ENCODE measurements at regions of chr5 and their contacts with region 1.

Region 1: DNA sequence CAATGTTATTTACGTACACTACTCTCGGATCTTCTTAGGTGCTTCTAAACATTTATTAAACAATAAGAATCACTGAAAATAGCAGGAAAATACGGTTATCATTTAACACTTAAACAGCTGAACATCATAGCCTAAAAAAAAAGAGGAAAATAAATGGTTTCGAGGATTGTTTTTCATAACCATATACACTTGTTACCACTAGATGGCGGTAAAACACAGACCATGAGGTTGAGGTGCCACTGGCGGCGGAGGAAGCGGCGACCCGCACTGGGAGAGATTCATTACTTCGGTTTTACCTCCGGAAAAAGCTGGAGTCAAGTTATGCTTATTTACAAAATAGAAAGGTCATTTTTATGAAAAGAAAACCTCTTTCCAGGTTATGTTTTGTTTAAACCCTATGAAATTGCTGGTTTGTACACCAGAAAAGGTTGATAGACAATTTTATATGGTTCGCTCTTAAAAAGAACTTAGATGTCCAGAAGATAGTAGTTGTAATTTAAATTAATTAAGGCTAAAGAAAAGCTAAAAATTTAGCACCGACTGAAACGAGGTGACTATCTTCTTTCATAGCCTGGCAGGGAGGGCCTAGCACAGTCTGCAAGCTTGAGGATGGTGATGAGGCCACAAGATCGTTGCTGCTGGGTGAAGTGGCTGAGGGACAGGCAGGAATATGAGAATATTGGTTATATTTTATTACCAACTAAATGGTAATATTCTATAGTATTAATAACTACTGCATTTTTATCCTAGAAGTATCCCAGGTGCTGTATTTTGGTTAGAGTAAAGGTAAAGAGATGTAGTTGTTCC is 605.7 kb downstream of the RAB3C start:
- H3K4me3 ChIP-seq: no peak overlapping the region
- H3K27ac ChIP-seq: no peak overlapping the region
- H3K4me1 ChIP-seq: peaks cover 11% of the 10 kb centered on the region
- CTCF ChIP-seq: peak; percentile 68; the same call in 1 of the 2 replicates

Region 2: DNA sequence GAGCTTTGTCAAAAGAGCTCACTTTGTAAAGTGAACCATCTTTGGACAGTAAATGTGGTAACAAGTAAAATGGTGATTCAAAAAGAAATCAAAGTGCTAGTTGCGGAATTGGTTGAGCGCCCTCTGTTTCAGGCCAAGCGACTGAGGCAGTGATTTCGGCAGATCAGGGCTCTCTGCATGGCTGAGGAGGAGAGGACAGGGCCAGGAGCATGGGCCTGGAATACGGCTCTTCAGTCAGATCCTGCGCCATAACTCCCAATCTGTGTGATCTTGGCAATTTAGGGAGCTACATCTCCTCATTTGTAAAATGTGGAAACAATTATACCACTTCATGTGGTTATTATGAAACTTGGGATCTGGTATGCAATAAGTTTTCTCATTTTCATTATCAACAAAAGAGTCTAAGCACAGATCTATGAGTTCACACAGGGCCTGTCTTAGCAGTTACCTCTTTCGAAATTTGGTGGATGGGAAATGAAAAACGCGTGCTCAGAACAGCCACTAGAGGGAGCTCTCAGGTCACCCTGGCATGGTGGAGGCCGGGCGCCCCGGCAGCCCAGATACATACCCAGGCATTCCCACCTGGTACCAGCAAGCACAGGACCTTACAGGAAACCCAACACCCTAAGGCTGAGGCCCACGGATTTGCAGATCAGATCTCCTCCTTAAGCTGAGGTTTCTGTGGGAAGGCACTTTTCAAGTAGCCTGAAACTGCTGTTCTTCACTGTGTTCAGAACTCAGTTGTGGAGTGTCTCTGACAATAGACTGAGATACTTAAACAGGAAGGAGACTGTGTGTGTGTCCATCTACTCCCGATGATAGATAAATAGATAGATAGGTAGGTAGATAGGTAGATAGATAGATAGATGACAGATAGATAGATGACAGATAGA is 302.1 kb before region 1 on chr5:
- CTCF ChIA-PET with region 1: interaction called, 17 read pairs
- POLR2A ChIA-PET with region 1: no interaction called
- H3K4me3 ChIP-seq: no peak overlapping the region
- H3K27ac ChIP-seq: no peak overlapping the region
- H3K4me1 ChIP-seq: no peaks in the 10 kb centered on the region; the same call in 1 of the 2 replicates
- CTCF ChIP-seq: peak; percentile 59; the same call in 1 of the 2 replicates

Region 3: GRCh38 chr5:59206132-59206581 is 17.5 kb after region 1 on chr5:
- CTCF ChIA-PET with region 1: interaction called, 28 read pairs
- POLR2A ChIA-PET with region 1: no interaction called
- H3K4me3 ChIP-seq: no peak overlapping the region
- H3K27ac ChIP-seq: no peak overlapping the region
- H3K4me1 ChIP-seq: peaks cover 14% of the 10 kb centered on the region
- CTCF ChIP-seq: no peak

Region 4: GRCh38 chr5:59272809-59273427 is 84.3 kb after region 1 on chr5:
- CTCF ChIA-PET with region 1: interaction called, 10 read pairs
- POLR2A ChIA-PET with region 1: no interaction called
- H3K4me3 ChIP-seq: no peak overlapping the region; the same call in none of the 2 replicates
- H3K27ac ChIP-seq: peak overlapping the region; percentile 52; the same call in 1 of the 2 replicates
- H3K4me1 ChIP-seq: peaks cover 20% of the 10 kb centered on the region
- CTCF ChIP-seq: no peak

Region 5: DNA sequence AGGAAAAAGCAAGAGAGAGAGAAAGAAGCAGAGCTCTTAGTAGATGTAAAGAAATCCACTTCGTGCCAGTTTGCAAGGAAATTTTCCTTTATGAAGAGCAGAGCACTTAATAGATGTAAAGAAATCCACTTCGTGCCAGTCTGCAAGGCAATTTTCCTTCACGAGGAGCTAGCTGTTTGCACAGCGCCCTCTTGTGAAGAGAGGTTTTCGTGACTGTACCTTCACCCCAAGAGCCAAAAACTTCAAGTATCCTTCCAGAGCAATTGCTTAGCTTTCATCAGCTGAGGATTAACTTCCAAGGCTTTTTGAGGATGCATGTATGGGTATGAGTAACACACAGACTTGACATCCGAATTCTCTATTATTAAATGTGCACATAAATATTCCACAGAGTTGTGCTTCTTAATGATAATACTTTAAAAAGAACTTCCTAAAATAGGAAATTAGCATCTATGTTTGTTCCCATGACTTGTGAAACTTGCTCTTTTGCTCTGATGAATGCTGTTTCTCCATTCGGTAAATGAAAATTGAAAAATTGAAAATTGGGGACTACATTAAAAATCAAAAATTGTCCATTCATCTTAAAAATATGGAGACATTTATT is 179.3 kb after region 1 on chr5:
- CTCF ChIA-PET with region 1: interaction called, 101 read pairs
- POLR2A ChIA-PET with region 1: interaction called, 3 read pairs
- H3K4me3 ChIP-seq: no peak overlapping the region
- H3K27ac ChIP-seq: no peak overlapping the region
- H3K4me1 ChIP-seq: peaks cover 18% of the 10 kb centered on the region
- CTCF ChIP-seq: peak; percentile 69; the same call in 1 of the 2 replicates

Region 6: GRCh38 chr5:59390074-59390659 is 201.5 kb after region 1 on chr5:
- CTCF ChIA-PET with region 1: interaction called, 116 read pairs
- POLR2A ChIA-PET with region 1: no interaction called
- H3K4me3 ChIP-seq: no peak overlapping the region
- H3K27ac ChIP-seq: no peak overlapping the region
- H3K4me1 ChIP-seq: no peaks in the 10 kb centered on the region
- CTCF ChIP-seq: no peak; the same call in 1 of the 2 replicates

Region 7: DNA sequence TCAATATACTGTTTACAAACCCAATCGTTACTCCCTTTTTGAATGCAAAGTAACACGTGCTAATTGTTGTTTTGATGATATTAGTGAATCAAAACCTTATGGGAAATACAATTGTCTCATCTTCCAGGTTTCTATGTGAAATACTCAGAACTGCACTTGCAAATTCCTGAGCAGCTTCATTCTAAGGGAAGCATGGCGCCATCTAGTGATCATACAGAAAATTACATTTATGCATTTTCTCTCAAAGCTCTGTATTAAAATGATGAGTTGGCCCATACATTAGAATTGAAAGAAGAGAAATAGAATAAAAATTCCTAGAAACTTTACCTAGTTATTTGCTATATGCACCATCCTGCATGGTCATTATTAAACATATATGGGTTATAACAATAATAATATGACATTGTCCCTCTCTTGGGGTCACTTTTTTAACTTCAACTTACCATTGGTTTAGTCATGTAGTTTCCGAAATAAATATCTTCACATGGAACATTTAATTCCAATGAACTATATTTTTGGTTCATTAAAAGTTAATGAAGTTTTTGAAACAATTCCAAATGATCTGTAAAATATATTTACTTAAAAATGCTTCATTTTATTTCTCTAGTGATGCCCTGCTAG is 484.9 kb after region 1 on chr5:
- CTCF ChIA-PET with region 1: interaction called, 10 read pairs
- POLR2A ChIA-PET with region 1: no interaction called
- H3K4me3 ChIP-seq: no peak overlapping the region
- H3K27ac ChIP-seq: no peak overlapping the region
- H3K4me1 ChIP-seq: no peaks in the 10 kb centered on the region; the same call in 1 of the 2 replicates
- CTCF ChIP-seq: peak; percentile 19; the same call in 1 of the 2 replicates